Dorsolateral prefrontal cortex (tissue), 120 donors: ENCODE measurements at regions of chr2 and their contacts with region 1.

Region 1: GRCh38 chr2:27133905-27134780 is at the start of gene PREB:
- DNase-seq: peak; percentile 88 to 99 (median 96)
- H3K4me3 ChIP-seq: peak within 1 kb of the TSS; percentile 45 to 100 (median 96)
- H3K27ac ChIP-seq: peak within 1 kb of the TSS in 57 of 59 donors; percentile 36 to 95 (median 87)
- H3K27me3 ChIP-seq: no peaks in the 10 kb centered on the region
- CTCF ChIP-seq: peak in 32 of 56 donors; percentile 3 to 55 (median 30)
- total RNA-seq, gene PREB: 25.2 to 52.0 (median 34.9) TPM

Region 2: GRCh38 chr2:26883956-26884355 is 250.2 kb before region 1 on chr2:
- intact Hi-C with region 1: no loop called
- DNase-seq: no peak
- H3K4me3 ChIP-seq: no peak overlapping the region
- H3K27ac ChIP-seq: peak overlapping the region in 26 of 59 donors; percentile 4 to 79 (median 50)
- H3K27me3 ChIP-seq: no peaks in the 10 kb centered on the region
- CTCF ChIP-seq: no peak

Region 3: GRCh38 chr2:27050281-27050995 is 83.7 kb before region 1 on chr2:
- intact Hi-C with region 1: loop called in 1 of 2 experiments (anchors 10 kb)
- DNase-seq: peak; percentile 88 to 97 (median 94)
- H3K4me3 ChIP-seq: peak overlapping the region; percentile 68 to 98 (median 91)
- H3K27ac ChIP-seq: peak overlapping the region; percentile 73 to 100 (median 97)
- H3K27me3 ChIP-seq: no peaks in the 10 kb centered on the region
- CTCF ChIP-seq: peak in 36 of 56 donors; percentile 6 to 57 (median 34)

Region 4: GRCh38 chr2:27211829-27212627 is 77.9 kb after region 1 on chr2 and contains the starts of genes ATRAID and SLC5A6:
- intact Hi-C with region 1: loop called (anchors 2 kb)
- DNase-seq: peak; percentile 71 to 92 (median 86)
- H3K4me3 ChIP-seq: peak within 1 kb of the TSS; percentile 64 to 100 (median 88)
- H3K27ac ChIP-seq: peak within 1 kb of the TSS; percentile 76 to 99 (median 96)
- H3K27me3 ChIP-seq: no peaks in the 10 kb centered on the region
- CTCF ChIP-seq: peak in 12 of 56 donors; percentile 1 to 51 (median 16)
- total RNA-seq, gene ATRAID: 28.0 to 68.1 (median 45.4) TPM
- total RNA-seq, gene SLC5A6: 21.6 to 107 (median 39.0) TPM